Cardiac septum (tissue), 1 donor: ENCODE measurements at regions of chr3 and their contacts with region 1.

Region 1: DNA sequence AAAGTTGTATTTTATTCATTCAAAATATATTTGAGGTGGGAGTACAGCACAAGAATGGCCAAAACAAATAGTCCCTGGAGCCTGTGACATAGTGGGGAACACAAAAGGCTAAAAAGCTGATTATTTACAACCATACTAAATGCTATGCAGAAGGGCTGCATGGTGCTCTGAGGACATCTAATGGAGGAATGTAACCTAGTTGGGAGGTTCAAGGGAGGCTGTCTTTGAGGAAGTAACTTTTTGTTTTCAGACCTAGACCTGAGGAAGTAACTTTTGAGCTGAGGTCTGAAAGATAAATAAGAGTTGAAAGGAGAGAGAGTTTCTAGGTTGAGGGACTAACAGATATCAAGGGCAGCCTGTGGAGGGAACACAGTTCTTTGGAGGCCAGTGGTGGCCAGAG is 34.8 kb upstream of the RASA2 start:
- DNase-seq: no peak

Region 2: DNA sequence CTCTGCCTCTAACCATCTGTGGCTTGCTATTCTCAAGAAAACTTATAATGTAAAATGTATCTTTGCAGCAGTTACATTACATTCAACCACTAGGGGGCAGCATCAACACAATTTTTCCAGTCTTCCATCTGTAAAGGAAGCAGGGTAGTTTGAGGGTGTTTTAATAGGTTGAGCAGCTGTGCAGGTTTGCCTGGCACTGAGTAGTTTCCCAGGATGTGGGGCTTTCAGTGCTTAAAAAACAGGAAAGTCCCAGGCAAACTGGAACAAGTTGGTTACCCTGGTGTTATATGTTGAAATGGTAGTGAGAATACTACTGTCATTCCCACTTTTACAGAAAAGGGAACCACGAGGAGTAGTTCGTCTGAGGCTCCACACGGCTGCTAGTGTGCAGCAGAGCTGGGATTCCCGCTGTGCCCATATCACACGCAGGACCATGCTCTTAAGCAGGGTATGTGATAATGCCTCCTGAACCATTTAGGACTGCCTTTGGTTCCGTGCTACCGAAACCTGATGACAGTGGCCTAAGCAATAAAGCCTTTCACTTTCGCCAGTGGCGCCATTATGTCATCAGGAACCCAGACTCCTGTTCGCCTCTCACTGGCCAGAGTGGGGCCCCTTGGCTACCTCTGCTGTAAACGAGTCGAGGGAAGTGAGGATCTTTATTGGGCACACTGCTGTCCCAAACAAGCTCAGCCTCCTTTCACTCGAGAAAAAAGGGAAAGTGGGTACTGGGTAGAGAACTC is 148.4 kb before region 1 on chr3:
- intact Hi-C with region 1: loop called (anchors 2 kb)
- DNase-seq: no peak

Region 3: GRCh38 chr3:141311496-141312353 is 140.3 kb before region 1 on chr3:
- intact Hi-C with region 1: loop called (anchors 2 kb)
- DNase-seq: peak; percentile 99

Region 4: DNA sequence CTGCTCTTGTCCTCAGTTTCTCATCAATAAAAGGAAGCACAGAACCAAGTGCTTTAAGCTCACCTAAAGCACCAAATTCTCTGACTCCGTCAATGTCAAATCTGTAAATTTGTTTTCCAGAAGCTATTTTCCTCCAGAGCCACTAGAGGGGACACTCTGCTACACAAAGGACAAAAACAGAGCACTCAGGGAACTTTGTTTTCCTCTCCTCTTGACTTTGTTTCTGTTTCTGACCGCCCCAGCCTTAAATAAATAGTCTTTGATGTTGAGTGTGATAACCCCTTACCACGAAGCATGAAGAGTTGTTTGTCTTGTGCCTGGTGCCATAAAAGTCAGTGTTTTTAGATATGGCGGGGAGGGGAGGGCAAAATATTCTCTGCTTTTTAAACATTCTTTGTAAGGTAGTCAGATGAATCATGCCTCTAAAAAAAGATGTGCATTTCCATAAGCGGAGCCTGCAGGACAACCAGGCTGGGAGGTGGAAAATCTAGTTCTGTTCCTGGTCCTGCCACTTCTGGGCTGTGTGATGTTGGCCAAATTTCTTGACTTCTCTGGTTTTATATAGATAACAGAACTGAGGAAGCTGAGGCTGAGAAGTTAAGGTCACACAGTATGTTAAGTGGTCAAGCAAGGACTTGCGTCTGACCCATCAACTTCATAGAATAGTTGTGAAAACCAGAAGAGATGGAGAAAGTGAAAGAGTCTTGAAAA is 91.0 kb before region 1 on chr3:
- intact Hi-C with region 1: loop called (anchors 1 kb)
- DNase-seq: no peak

Region 5: DNA sequence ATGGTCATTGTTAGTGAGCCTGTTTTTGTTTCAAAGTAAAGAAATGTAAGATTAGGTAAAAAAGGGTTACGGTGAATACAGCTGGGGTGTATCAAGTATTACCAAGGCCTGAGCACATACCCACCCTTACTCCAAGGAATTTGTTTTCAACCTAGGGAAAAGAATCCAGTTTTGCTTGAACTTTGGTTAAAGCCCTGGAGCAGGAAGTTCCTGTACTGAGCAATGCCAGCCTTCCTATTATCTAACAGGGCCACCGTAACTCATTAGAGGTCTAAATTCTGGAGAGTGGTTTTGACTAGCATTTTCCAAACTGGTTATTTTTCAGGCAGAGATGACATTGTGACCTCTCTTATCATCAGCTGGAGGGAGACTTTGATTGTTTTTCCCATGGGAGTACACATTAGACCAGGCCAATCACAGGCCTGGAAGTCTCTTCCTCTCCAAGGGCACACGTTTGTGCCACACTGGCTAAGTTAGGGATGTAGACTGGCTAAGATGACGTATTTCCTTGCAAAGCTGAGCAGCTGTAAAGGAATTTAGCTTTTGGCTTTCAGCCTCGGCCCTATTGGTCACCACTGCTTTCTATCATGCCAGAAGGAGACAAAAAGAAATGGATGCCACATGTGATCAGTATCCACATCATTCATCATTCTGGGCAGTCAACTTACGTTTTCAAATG is 258.7 kb after region 1 on chr3:
- intact Hi-C with region 1: no loop called
- DNase-seq: no peak